ENCODE measurements at regions of chr2 and their contacts with region 1.

Region 1: GRCh38 chr2:217421834-217422233 is 562.0 kb upstream of the TNP1 start:
- DNase-seq: no peak
- H3K4me3 ChIP-seq: no peak overlapping the region
- H3K27ac ChIP-seq: no peak overlapping the region
- H3K4me1 ChIP-seq: no peaks in the 10 kb centered on the region
- H3K27me3 ChIP-seq: no peaks in the 10 kb centered on the region
- CTCF ChIP-seq: no peak

Region 2: GRCh38 chr2:217301142-217301925 is 120.5 kb before region 1 on chr2:
- dilution Hi-C with region 1: no loop called
- DNase-seq: no peak
- H3K4me3 ChIP-seq: no peak overlapping the region
- H3K27ac ChIP-seq: no peak overlapping the region
- H3K4me1 ChIP-seq: peaks cover 6% of the 10 kb centered on the region
- H3K27me3 ChIP-seq: no peaks in the 10 kb centered on the region
- CTCF ChIP-seq: no peak

Region 3: DNA sequence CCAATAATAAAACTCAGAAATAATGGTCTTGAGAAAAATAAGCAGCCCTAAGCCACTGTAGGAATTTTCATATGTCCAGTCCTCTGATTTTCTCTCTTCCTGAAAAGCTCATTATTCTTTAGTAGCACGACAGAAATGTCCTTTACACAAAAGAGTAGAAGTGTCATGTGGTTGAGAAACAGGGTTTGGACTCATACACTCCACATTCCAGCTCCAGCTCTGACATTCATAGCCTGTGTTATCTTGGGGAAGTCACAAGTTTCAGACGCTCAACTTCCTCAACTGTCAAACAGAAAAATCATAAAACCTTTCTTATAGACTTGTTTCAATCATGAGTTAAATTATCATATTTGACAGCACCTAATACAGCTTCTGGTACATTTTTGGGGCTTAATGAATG is 69.4 kb after region 1 on chr2:
- dilution Hi-C with region 1: loop called (anchors 5 kb)
- DNase-seq: no peak
- H3K4me3 ChIP-seq: no peak overlapping the region
- H3K27ac ChIP-seq: no peak overlapping the region
- H3K4me1 ChIP-seq: peaks cover 8% of the 10 kb centered on the region
- H3K27me3 ChIP-seq: no peaks in the 10 kb centered on the region
- CTCF ChIP-seq: no peak